Lower leg skin (tissue), 4 donors: ENCODE measurements at regions of chr7 and their contacts with region 1.

Region 1: DNA sequence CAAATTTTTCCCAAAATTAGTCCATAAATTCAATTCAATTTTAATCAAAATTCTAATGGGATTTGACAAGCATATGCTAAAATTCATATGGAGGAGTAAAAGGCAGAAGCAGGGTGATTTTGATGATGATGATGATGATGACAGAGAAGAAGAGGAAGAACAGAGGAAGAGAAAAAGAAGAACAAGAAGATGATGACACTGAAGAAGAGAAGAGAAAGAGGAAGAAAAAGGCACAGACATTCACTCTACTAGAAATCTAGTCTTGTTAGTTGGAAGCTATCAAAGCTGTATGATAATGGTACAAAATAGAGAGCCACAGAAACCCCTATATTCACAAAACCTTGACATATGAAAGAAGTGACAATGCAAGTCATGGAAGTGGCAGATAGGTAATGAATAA is 157.9 kb downstream of the ELMO1 start:
- DNase-seq: no peak
- H3K4me3 ChIP-seq: no peak overlapping the region
- CTCF ChIP-seq: no peak
- POLR2A ChIP-seq: no peak

Region 2: GRCh38 chr7:36895192-36895591 is 395.5 kb before region 1 on chr7:
- intact Hi-C with region 1: no loop called
- DNase-seq: no peak
- H3K4me3 ChIP-seq: no peak overlapping the region
- CTCF ChIP-seq: no peak
- POLR2A ChIP-seq: no peak

Region 3: DNA sequence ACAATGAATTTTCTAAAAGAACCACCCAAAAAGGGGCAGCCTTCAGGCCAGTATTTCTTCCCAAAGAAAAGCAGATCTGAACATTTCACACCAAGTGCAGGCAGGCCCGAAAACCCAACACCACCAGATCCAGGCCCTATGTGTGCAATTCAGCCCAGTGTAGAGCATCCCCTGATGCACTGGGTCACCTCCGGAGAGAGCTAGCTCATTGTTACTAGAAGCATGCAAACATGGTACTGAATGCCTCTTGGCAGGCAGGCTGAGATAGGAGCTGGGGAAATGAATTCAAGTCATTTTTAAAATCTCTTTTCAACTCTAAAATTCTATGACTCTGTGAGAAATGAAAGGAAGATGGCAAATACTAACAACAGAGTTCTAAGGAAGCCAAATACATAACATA is 16.8 kb before region 1 on chr7:
- intact Hi-C with region 1: loop called (anchors 2 kb)
- DNase-seq: no peak
- H3K4me3 ChIP-seq: no peak overlapping the region
- CTCF ChIP-seq: no peak
- POLR2A ChIP-seq: no peak